ENCODE measurements at regions of chr15 and their contacts with region 1.

Region 1: DNA sequence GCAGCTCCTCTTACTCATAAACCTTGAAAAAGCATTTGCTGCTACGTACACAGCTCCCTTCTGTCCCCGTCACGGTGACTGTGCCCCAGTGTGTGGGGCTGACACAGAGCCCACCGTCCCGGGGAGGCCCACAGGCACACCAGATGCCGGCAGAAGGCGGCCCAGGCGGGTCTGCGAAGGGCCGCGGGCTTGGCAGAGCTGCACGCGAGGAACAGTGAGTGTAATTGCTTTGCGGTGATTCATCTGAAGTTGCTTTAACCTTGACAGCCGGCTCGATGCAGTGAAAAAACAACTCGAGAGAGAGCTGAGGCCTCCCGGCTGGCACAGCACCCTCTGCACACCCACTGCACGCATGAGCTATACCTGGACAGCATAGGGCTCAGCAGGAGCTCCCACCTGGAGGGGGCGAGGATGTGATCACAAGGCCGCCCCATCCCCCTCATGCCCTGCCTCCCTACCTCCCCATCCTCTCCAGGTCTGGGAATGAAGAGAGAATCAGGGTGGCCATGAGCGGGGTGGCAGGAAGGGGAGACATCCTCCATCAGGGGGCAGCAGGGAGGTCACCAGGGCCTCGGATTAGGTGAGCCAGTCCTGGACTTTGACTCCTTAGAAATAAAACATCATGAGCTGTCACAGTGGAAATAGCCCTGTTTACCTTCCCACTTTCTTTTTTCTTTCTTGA is 172.7 kb downstream of the MEGF11 start:
- DNase-seq: peak; percentile 62
- ATAC-seq: peak; percentile 80
- H3K4me3 Mint-ChIP-seq: no peak overlapping the region
- H3K27ac Mint-ChIP-seq: no peak overlapping the region
- H3K4me1 Mint-ChIP-seq: peaks cover 14% of the 10 kb centered on the region
- H3K27me3 Mint-ChIP-seq: no peaks in the 10 kb centered on the region
- CTCF ChIP-seq: 0 out of 2 replicates have a peak, but pooled peaks have one; percentile 17

Region 2: DNA sequence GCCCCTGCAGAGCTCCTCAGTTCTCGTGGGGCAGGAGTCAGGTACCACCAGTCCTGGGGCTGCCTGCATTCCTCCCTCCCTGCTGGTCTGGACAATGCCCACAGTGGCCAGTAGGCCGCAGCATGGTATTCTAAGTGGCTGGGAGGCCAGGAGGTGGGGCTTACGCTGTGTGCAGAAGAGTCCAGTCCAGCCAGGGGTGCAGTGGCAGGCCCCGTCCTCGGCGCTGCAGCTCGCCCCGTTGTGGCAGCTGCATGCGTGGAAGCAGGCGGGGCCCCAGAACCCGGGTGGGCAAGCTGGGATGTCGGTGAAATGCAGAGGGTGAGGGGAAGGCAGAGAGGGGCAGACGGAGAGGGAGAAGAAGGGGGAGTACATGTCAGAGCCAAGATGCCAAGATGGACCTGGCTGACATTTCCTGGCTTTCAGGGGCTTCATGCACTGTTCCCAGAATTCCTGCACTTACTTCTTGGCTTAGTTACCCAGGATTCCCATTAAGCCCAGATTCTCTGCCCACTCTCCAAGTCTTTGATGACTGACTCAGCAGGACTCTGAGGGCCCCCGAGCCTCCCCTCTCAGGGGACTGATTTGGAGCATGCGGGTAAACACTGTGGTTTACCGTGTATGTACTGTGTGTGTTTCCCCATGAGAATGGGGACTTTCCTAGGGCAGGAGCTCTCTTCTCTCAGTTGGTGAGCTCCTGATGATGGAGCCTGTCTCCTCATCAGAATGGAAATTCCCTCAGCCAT is 164.0 kb before region 1 on chr15:
- CTCF ChIA-PET with region 1: interaction called, 11 read pairs
- POLR2A ChIA-PET with region 1: no interaction called
- DNase-seq: peak; percentile 87
- ATAC-seq: peak; percentile 99
- H3K4me3 Mint-ChIP-seq: no peak overlapping the region
- H3K27ac Mint-ChIP-seq: 0 out of 2 replicates have a peak overlapping the region, but pooled peaks have one; percentile 57
- H3K4me1 Mint-ChIP-seq: peaks cover 18% of the 10 kb centered on the region
- H3K27me3 Mint-ChIP-seq: no peaks in the 10 kb centered on the region
- CTCF ChIP-seq: peak; percentile 37; the same call in 1 of the 2 replicates

Region 3: GRCh38 chr15:66025015-66025452 is 55.8 kb before region 1 on chr15:
- CTCF ChIA-PET with region 1: interaction called, 10 read pairs
- POLR2A ChIA-PET with region 1: no interaction called
- DNase-seq: no peak
- ATAC-seq: peak; percentile 11; the same call in 1 of the 2 replicates
- H3K4me3 Mint-ChIP-seq: 0 out of 2 replicates have a peak overlapping the region, but pooled peaks have one; percentile 32
- H3K27ac Mint-ChIP-seq: no peak overlapping the region
- H3K4me1 Mint-ChIP-seq: peaks cover 64% of the 10 kb centered on the region
- H3K27me3 Mint-ChIP-seq: peaks cover 3% of the 10 kb centered on the region
- CTCF ChIP-seq: no peak

Region 4: DNA sequence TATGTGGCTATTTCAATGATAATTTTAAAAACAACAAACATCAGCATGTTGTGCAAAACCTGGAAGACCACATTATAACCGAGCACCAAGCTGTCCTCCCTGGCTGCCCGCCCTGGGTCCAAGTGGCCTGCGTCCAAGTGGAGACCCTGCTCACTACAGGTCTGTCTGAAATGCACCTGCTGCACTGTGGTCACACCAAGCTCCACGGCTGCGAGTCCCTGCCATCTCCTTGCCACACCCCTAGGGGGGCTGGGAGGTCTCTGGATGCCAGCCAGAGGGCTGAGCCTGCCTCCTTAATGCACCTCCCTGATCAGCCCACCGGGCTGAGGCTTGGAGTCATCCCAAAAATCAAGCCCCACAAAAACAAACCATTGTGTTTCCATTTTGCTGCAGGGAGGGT is 14.4 kb before region 1 on chr15:
- CTCF ChIA-PET with region 1: interaction called, 35 read pairs
- POLR2A ChIA-PET with region 1: no interaction called
- DNase-seq: no peak
- ATAC-seq: peak; percentile 11; the same call in 1 of the 2 replicates
- H3K4me3 Mint-ChIP-seq: no peak overlapping the region
- H3K27ac Mint-ChIP-seq: no peak overlapping the region
- H3K4me1 Mint-ChIP-seq: peaks cover 64% of the 10 kb centered on the region
- H3K27me3 Mint-ChIP-seq: no peaks in the 10 kb centered on the region
- CTCF ChIP-seq: no peak

Region 5: DNA sequence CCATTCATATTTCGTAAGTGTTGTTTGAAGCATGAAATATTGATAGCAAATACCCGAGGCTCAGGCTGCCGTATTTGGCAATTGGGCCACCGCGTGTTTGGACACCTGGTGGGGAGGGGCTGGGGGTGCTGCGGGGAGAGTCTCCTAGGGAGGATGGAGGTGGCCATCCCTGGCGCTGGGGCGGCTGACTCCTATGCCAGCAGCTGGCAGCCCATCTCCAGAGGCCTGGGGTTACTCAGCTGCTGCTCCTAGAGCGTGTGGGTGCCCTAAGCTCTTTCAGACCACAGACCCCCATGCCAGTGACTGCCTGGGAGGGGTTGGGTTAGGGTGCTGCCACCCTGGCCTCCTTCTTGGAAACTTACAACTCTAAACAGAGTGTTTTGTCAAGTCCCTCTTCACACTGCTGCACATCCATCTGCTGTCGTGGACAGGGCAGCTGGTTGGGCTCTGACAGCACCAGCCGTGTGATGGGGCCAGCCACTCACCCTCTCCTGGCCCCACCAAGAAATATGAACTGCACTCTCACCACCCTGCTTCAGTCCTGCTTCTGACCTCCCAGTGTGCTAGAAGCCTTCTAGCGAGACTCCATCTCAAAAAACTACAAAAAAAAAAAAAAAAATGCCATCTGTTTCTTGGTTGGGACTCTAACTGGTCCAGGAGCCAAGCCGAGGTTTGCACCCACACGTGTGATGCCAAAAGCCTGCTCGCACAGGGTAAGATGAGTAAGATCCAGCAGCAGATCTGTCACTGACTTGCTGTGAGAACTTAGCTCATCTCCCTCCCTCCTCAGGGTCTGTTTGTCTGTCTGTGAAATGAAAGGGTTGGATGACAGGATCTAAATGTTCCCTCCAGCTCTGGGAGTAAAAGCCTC is 16.5 kb after region 1 on chr15:
- CTCF ChIA-PET with region 1: interaction called, 17 read pairs
- POLR2A ChIA-PET with region 1: no interaction called
- DNase-seq: no peak
- ATAC-seq: no peak
- H3K4me3 Mint-ChIP-seq: no peak overlapping the region
- H3K27ac Mint-ChIP-seq: no peak overlapping the region
- H3K4me1 Mint-ChIP-seq: peaks cover 20% of the 10 kb centered on the region
- H3K27me3 Mint-ChIP-seq: no peaks in the 10 kb centered on the region
- CTCF ChIP-seq: no peak

Region 6: DNA sequence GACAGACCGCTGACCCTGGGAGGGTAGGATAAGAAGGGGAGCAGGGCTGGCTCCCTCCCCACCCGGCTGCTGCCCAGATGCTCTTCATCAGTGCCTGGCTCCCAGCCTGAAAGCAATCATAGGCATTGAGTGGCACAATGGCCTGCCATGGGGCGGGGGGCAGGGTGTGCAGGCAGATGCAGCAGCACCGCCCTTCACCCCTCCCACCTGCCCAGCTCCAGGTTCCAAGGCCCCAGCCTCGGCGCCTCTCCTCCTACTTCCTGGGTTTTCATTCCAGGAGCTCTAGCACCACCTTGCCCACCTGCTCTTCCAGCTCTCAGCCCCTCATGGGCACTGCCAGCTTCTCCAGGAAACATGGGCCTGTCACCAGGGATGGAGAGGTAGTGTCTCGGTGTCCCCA is 71.0 kb after region 1 on chr15:
- CTCF ChIA-PET with region 1: interaction called, 15 read pairs
- POLR2A ChIA-PET with region 1: no interaction called
- DNase-seq: peak; percentile 66
- ATAC-seq: peak; percentile 89
- H3K4me3 Mint-ChIP-seq: no peak overlapping the region
- H3K27ac Mint-ChIP-seq: no peak overlapping the region
- H3K4me1 Mint-ChIP-seq: peaks cover 14% of the 10 kb centered on the region
- H3K27me3 Mint-ChIP-seq: no peaks in the 10 kb centered on the region
- CTCF ChIP-seq: no peak